ENCODE measurements at regions of chr21 and their contacts with region 1.

Region 1: DNA sequence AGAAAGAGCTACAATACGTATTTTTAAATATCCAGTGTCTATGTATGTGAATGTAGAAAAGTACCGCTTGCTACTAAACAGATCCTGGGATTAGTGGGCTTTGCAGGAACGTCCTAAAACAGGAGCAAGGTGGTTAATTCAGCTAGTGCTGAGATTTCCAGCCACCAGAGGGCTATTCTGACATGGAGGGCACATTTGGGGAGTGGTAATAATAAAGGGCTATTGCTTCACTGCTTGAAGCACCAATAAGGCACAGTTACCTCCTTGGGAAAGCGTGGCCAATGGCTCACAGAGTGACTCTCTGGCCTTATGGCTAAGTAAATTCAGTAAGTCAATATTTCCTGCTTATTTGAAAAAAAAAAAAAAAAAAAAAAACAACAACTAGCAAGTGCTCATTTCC is 152.4 kb downstream of the GABPA start:
- DNase-seq: no peak
- H3K4me3 ChIP-seq: no peak overlapping the region
- H3K27ac ChIP-seq: no peak overlapping the region
- H3K4me1 ChIP-seq: no peaks in the 10 kb centered on the region
- H3K27me3 ChIP-seq: no peaks in the 10 kb centered on the region

Region 2: GRCh38 chr21:25963181-25963580 is 76.0 kb after region 1 on chr21:
- CTCF ChIA-PET with region 1: no interaction called
- POLR2A ChIA-PET with region 1: no interaction called
- DNase-seq: no peak
- H3K4me3 ChIP-seq: no peak overlapping the region
- H3K27ac ChIP-seq: no peak overlapping the region
- H3K4me1 ChIP-seq: peaks cover 12 to 54% (median 21%) of the 10 kb centered on the region in 4 experiments
- H3K27me3 ChIP-seq: no peaks in the 10 kb centered on the region

Region 3: GRCh38 chr21:26001356-26001755 is 114.2 kb after region 1 on chr21:
- CTCF ChIA-PET with region 1: interaction called, 11 read pairs
- POLR2A ChIA-PET with region 1: no interaction called
- DNase-seq: peak; percentile 2 to 32 (median 27)
- H3K4me3 ChIP-seq: no peak overlapping the region
- H3K27ac ChIP-seq: no peak overlapping the region
- H3K4me1 ChIP-seq: peaks cover 0 to 5% (median 2%) of the 10 kb centered on the region in 4 experiments
- H3K27me3 ChIP-seq: no peaks in the 10 kb centered on the region

Region 4: GRCh38 chr21:26061437-26061836 is 174.3 kb after region 1 on chr21:
- CTCF ChIA-PET with region 1: no interaction called
- POLR2A ChIA-PET with region 1: no interaction called
- DNase-seq: no peak
- H3K4me3 ChIP-seq: no peak overlapping the region
- H3K27ac ChIP-seq: no peak overlapping the region
- H3K4me1 ChIP-seq: no peaks in the 10 kb centered on the region
- H3K27me3 ChIP-seq: no peaks in the 10 kb centered on the region

Region 5: DNA sequence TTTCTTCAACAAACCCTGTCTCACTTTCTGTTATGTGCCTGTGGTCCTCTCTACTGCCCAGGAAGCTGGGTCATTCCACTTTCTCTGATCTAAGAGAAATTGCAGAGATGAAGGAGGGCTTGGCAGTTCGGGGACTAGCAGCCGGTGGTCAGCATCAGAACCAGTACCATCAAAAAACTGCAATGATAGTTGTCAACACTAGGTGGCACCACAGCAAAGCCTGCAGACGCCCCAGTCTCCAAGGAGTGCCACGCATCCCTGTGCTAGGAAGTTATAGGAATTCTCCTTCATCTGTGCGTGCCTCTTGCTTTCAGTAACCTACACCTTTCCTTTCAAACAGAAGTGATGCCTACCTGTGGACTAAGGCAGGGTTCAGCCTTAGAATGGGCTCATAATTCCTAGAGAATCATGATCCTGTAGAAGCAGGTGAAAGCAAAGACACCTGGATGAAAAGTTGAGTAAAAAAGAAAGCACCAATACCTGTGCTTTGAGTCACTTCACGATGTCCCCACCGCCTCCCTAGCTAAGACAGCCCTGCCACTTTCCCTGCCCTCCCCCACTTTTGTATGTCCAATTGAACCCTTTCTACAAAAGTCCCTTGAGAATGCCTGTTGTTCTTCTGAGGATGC is 828.8 kb after region 1 on chr21:
- CTCF ChIA-PET with region 1: interaction called, 10 read pairs
- POLR2A ChIA-PET with region 1: no interaction called
- DNase-seq: peak; percentile 31 to 46 (median 46)
- H3K4me3 ChIP-seq: peak overlapping the region in 1 of 7 experiments; percentile 12
- H3K27ac ChIP-seq: no peak overlapping the region
- H3K4me1 ChIP-seq: peaks cover 0 to 7% (median 0%) of the 10 kb centered on the region in 4 experiments
- H3K27me3 ChIP-seq: no peaks in the 10 kb centered on the region